Tibial artery (tissue), 4 donors: ENCODE measurements at regions of chr12 and their contacts with region 1.

Region 1: DNA sequence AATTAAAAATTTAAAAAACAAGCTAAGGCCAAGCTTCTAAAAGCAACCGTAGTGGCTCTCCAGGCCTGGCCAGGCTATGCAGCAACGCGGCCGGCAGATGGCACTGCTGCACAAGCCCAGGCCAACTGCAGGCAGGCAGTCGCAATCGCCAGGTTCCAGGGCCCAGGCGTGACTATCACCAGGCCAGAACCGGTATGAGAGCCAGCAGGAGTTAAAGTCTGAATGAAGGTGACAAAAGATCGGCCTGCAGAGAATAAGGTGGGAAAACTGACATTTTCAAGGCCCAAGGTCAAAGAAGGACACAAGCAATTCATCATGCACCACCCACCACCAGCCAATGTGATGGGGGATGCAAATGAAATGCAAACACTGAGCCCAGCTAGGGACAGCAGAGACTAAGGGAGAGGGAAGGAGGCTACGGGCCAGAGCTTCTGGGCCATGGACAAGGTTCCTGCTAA is 43.6 kb upstream of the ANO2 start:
- DNase-seq: peak; percentile 69 to 79
- H3K4me3 ChIP-seq: no peak overlapping the region
- H3K27ac ChIP-seq: no peak overlapping the region
- H3K4me1 ChIP-seq: peaks cover 0 to 4% (median 0%) of the 10 kb centered on the region in 4 donors
- H3K27me3 ChIP-seq: no peaks in the 10 kb centered on the region
- CTCF ChIP-seq: peak; percentile 93 to 96

Region 2: GRCh38 chr12:5665615-5666014 is 323.1 kb before region 1 on chr12:
- intact Hi-C with region 1: no loop called
- DNase-seq: no peak
- H3K4me3 ChIP-seq: no peak overlapping the region
- H3K27ac ChIP-seq: no peak overlapping the region
- H3K4me1 ChIP-seq: peaks cover 0 to 5% (median 0%) of the 10 kb centered on the region in 4 donors
- H3K27me3 ChIP-seq: no peaks in the 10 kb centered on the region
- CTCF ChIP-seq: no peak

Region 3: DNA sequence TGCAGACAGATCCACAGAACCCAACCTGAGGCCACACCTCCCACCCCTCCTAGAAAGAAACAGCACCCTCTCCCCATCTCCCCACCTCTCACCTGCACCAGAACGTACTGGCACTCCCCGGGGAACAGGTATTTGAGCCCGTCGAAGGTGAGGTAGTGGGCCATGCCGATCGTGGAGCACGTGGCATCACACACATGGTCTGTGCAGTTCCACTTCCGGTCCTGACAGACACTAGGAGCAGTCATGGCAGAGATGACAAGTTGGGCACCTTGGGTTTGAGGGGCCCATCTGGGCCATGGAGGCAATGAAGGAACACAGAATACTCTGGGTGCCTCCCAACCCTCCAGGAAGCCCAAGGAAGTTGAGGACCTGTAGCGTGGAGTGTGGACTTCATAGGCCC is 45.9 kb after region 1 on chr12:
- intact Hi-C with region 1: loop called (anchors 2 kb)
- DNase-seq: peak in 1 of 2 donors; percentile 41
- H3K4me3 ChIP-seq: no peak overlapping the region
- H3K27ac ChIP-seq: no peak overlapping the region
- H3K4me1 ChIP-seq: no peaks in the 10 kb centered on the region
- H3K27me3 ChIP-seq: no peaks in the 10 kb centered on the region
- CTCF ChIP-seq: no peak

Region 4: DNA sequence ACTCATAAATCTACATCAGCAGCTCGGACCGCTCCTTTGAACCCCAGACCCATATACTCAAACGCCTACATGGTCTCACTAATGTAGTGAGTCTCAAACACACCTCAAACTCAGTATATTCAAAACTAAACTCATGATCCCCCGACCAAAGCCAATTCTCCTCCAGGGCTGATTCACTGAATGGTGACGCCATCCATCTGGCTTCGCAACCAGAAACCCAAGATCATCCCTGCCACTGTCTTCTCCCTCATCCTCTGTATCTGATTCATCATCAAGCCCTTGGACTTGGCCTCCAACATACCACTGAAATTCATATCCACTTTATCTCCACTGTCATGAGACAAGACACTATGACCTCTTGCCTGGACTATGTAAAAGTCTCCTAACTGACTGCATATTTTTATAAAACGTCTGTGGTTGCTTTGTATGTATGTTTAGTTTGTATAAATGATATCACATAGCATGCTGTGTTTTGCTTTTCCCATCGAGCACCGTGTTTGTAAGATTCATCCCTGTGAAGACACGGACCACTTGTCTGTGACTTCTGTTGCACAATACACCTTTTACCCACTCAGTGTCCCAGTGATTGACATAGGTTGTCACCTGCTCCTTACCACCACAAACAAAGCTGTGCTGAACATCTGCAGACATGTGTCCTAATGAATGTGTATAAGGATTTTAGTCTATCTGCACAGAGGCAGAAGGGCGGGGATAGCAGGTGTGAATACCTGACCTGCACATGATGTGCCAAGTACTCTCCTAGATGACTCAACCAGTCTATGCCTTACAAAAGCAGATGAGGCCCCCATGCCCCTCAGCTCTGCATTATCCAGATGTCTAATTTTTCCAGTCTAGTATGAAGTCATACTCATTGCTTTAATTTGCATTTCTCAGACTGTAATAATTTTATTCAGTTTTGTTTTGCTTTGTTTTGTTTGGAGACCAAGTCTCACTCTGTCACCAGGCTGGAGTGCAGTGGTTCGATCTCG is 58.9 kb after region 1 on chr12:
- intact Hi-C with region 1: no loop called
- DNase-seq: no peak
- H3K4me3 ChIP-seq: no peak overlapping the region
- H3K27ac ChIP-seq: no peak overlapping the region
- H3K4me1 ChIP-seq: peaks cover 0 to 18% (median 10%) of the 10 kb centered on the region in 4 donors
- H3K27me3 ChIP-seq: no peaks in the 10 kb centered on the region
- CTCF ChIP-seq: no peak

Region 5: GRCh38 chr12:6278439-6279255 is 290.0 kb after region 1 on chr12:
- intact Hi-C with region 1: loop called (anchors 5 kb)
- DNase-seq: peak; percentile 78 to 95
- H3K4me3 ChIP-seq: peak overlapping the region; percentile 49 to 60
- H3K27ac ChIP-seq: peak overlapping the region; percentile 77 to 82
- H3K4me1 ChIP-seq: peaks cover 0 to 33% (median 27%) of the 10 kb centered on the region in 4 donors
- H3K27me3 ChIP-seq: no peaks in the 10 kb centered on the region
- CTCF ChIP-seq: peak; percentile 84 to 100

Region 6: DNA sequence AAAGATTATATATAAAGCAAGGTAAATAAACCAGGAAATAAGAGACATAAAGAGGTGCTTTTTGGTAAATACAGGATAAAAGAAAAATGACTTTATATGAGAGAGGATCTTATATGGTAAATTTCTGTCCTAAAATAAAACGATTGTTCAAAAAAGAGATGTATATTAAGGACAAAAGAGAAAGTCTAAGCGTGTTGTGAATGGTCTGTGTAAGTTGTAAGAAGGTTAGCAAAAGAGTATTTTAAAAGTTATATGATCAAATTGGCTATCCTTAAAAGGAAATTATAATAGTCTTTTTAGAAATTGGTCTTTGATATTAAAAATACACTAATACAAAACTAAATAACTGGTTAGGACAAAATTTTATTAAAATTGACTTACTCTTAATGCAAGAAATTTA is 1301.1 kb after region 1 on chr12:
- intact Hi-C with region 1: no loop called
- DNase-seq: no peak
- H3K4me3 ChIP-seq: no peak overlapping the region
- H3K27ac ChIP-seq: no peak overlapping the region
- H3K4me1 ChIP-seq: no peaks in the 10 kb centered on the region
- H3K27me3 ChIP-seq: no peaks in the 10 kb centered on the region
- CTCF ChIP-seq: no peak